AG04450 (cell line): ENCODE measurements at regions of chr19 and their contacts with region 1.

Region 1: GRCh38 chr19:51135986-51136762 is 5.9 kb upstream of the SIGLEC7 start:
- DNase-seq: no peak
- H3K4me3 ChIP-seq: no peak overlapping the region
- H3K27ac ChIP-seq: no peak overlapping the region
- H3K27me3 ChIP-seq: no peaks in the 10 kb centered on the region
- CTCF ChIP-seq: no peak

Region 2: GRCh38 chr19:51064534-51065220 is 71.5 kb before region 1 on chr19 and contains the start of gene KLK13:
- CTCF ChIA-PET with region 1: no interaction called
- POLR2A ChIA-PET with region 1: no interaction called
- DNase-seq: no peak
- H3K4me3 ChIP-seq: peak within 1 kb of the TSS; percentile 13; the same call in 1 of the 2 replicates
- H3K27ac ChIP-seq: no peak within 1 kb of the TSS
- H3K27me3 ChIP-seq: no peaks in the 10 kb centered on the region
- CTCF ChIP-seq: no peak
- polyA plus RNA-seq, gene KLK13: not detected in 2 replicates

Region 3: GRCh38 chr19:51097166-51097738 is 38.9 kb before region 1 on chr19:
- CTCF ChIA-PET with region 1: interaction called, 11 read pairs
- POLR2A ChIA-PET with region 1: no interaction called
- DNase-seq: no peak
- H3K4me3 ChIP-seq: no peak overlapping the region
- H3K27ac ChIP-seq: no peak overlapping the region
- H3K27me3 ChIP-seq: no peaks in the 10 kb centered on the region
- CTCF ChIP-seq: peak; percentile 67

Region 4: DNA sequence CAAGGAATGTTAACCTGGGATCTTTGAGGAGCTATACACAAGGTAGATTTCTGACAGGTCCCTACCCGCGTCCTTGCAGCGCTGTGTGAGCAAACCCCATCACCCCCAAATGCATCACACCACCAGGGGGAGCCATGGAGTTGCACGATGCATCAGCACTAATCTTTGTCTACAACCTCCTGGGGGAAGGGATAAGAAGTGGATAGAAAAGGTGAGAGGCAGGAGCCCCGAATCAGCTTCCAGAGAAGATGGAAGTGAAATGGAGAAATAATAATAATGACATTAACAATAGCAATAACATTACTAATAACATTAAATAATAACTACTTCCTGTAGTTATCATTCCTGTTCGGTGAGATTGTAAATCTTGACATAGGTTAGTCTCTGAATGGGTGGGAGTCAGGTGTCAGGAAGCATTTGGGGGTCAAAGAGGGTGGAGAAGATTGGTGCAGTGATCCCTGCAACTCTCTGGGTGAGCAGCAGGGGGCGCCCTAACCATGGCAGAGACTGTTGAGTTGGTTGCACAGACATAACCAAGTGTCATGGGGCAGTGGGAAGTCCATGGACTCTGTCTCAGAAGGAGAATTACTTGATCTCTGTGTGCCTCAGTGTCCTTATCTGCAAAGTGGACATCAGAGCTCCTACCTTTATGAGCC is 22.4 kb after region 1 on chr19:
- CTCF ChIA-PET with region 1: interaction called, 10 read pairs
- POLR2A ChIA-PET with region 1: no interaction called
- DNase-seq: no peak
- H3K4me3 ChIP-seq: no peak overlapping the region
- H3K27ac ChIP-seq: no peak overlapping the region
- H3K27me3 ChIP-seq: peaks cover 3% of the 10 kb centered on the region
- CTCF ChIP-seq: peak; percentile 58